HEK293 (cell line): ENCODE measurements at regions of chr6 and their contacts with region 1.

Region 1: GRCh38 chr6:146161664-146162063 is 132.8 kb downstream of the GRM1 start:
- H3K4me3 ChIP-seq: no peak overlapping the region
- H3K27ac ChIP-seq: no peak overlapping the region
- H3K4me1 ChIP-seq: no peaks in the 10 kb centered on the region
- CTCF ChIP-seq: no peak

Region 2: GRCh38 chr6:146135167-146135566 is 26.5 kb before region 1 on chr6:
- CTCF ChIA-PET with region 1: interaction called, 11 read pairs
- POLR2A ChIA-PET with region 1: no interaction called
- H3K4me3 ChIP-seq: no peak overlapping the region
- H3K27ac ChIP-seq: no peak overlapping the region
- H3K4me1 ChIP-seq: no peaks in the 10 kb centered on the region
- CTCF ChIP-seq: no peak

Region 3: DNA sequence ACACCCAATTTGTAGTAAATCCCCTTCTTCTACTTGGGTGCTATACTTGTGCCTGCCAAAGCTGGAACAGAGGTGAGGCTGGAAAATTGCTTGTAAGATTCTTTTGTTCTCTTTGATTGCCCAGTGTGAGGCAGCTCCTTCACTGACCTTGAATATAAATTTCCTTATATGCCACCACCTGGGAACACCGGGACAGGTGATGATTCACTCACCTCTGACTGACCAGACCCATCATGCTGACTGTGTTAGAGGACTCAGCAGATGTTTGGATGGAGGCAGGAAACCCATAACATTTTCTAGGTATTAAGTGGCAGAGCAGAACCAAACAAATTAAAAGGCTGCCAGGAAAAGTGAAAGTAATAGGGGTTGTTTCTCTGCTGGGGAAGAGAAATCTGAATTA is 11.9 kb before region 1 on chr6:
- CTCF ChIA-PET with region 1: no interaction called
- POLR2A ChIA-PET with region 1: no interaction called
- H3K4me3 ChIP-seq: no peak overlapping the region
- H3K27ac ChIP-seq: no peak overlapping the region
- H3K4me1 ChIP-seq: no peaks in the 10 kb centered on the region
- CTCF ChIP-seq: no peak